ENCODE measurements at regions of chr1 and their contacts with region 1.

Region 1: DNA sequence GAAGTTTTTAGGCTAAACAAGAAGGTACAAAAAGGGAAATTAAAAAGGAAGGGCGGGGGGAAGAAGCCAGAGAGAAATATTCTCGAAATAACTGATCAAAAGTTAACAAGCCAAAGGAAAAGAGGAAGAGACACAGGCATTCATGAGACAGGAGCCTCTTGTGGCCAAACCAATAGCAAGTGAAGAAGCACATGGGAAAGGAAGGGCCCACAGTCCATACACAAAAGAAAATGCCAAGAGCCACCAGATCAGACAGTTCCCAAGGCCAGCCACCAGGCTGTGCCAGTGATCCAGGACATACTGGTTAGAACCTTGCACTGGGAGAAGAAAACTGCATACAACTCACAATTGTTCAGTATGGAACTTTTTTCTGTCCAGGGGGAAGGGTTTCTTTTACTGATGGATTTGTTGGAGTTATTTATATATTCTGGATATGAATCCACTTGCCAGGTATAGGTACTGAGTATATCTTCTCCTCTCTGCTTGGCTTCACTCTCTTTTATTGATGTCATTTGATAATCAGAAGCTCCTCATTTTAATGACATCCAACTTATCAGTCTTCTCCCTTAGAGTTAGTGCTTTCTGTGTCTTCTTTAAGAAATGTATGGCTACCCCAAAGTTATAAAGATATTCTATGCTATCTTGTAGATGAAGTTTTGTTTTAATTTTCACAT is 76.8 kb downstream of the CD46 start:
- DNase-seq: peak in 1 of 2 donors; percentile 91
- H3K4me3 ChIP-seq: no peak overlapping the region
- H3K27ac ChIP-seq: peak overlapping the region; percentile 12 to 98
- H3K4me1 ChIP-seq: peaks cover 28 to 71% of the 10 kb centered on the region in 2 donors
- H3K27me3 ChIP-seq: no peaks in the 10 kb centered on the region
- CTCF ChIP-seq: peak; percentile 84 to 93 (median 88)

Region 2: GRCh38 chr1:207848234-207848633 is 19.6 kb after region 1 on chr1:
- intact Hi-C with region 1: loop called (anchors 2 kb)
- DNase-seq: peak; percentile 53 to 84
- H3K4me3 ChIP-seq: no peak overlapping the region
- H3K27ac ChIP-seq: peak overlapping the region; percentile 64 to 82
- H3K4me1 ChIP-seq: peaks cover 20 to 72% of the 10 kb centered on the region in 2 donors
- H3K27me3 ChIP-seq: no peaks in the 10 kb centered on the region
- CTCF ChIP-seq: no peak

Region 3: GRCh38 chr1:207868774-207869721 is 40.4 kb after region 1 on chr1:
- intact Hi-C with region 1: loop called (anchors 1 kb)
- DNase-seq: peak in 1 of 2 donors; percentile 90
- H3K4me3 ChIP-seq: peak overlapping the region; percentile 86 to 98
- H3K27ac ChIP-seq: peak overlapping the region; percentile 88 to 98
- H3K4me1 ChIP-seq: peaks cover 16 to 36% of the 10 kb centered on the region in 2 donors
- H3K27me3 ChIP-seq: no peaks in the 10 kb centered on the region
- CTCF ChIP-seq: peak; percentile 65 to 99 (median 73)

Region 4: DNA sequence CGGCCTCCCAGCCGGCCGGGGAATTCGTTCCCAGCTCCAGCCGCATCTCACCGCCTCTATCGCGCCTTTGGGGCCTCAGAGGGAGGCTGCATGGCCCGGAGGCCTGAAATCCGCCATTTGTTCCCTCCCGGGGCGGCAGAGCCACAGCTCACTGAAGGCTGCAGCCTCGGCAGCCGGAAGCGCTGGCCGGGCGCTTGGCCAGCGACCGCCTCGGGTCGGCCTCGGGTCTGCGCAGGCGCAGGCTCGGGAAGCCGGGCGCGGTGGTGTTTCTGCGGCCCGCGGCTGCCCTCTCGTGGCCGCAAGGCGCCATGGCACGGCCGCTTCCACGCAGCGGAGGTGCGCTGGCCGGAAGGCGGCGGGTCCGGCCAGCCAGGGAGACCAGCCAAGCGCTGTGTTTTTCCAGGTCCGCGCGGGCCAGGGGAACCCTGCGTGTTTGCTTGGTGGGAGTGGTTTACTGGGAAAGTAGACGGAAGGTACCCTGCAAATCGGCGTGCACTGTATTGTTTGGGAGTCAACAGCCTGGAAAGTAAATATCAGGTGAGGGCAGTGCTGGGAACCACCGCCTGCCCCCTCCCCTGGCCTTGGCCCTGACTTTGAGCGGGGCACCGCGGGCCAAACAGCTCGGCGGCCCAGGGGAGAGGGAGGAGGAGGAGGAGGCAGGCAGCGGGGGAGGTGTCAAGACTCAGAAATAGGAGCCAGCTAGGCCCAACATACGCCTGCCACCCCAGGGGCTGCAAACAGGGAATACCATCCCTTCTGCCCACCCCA is 135.0 kb after region 1 on chr1:
- intact Hi-C with region 1: loop called (anchors 1 kb)
- DNase-seq: peak; percentile 35 to 95
- H3K4me3 ChIP-seq: peak overlapping the region; percentile 57 to 62
- H3K27ac ChIP-seq: peak overlapping the region; percentile 92
- H3K4me1 ChIP-seq: peaks cover 0 to 27% of the 10 kb centered on the region in 2 donors
- H3K27me3 ChIP-seq: no peaks in the 10 kb centered on the region
- CTCF ChIP-seq: peak; percentile 90 to 100 (median 96)

Region 5: GRCh38 chr1:208207388-208208131 is 378.9 kb after region 1 on chr1:
- intact Hi-C with region 1: loop called (anchors 5 kb)
- DNase-seq: peak; percentile 55 to 90
- H3K4me3 ChIP-seq: no peak overlapping the region
- H3K27ac ChIP-seq: peak overlapping the region; percentile 59 to 92
- H3K4me1 ChIP-seq: peaks cover 23 to 57% of the 10 kb centered on the region in 2 donors
- H3K27me3 ChIP-seq: no peaks in the 10 kb centered on the region
- CTCF ChIP-seq: no peak

Region 6: GRCh38 chr1:208245185-208245705 is 416.6 kb after region 1 on chr1:
- intact Hi-C with region 1: loop called (anchors 5 kb)
- DNase-seq: peak; percentile 62 to 98
- H3K4me3 ChIP-seq: peak overlapping the region; percentile 75 to 96
- H3K27ac ChIP-seq: peak overlapping the region; percentile 91 to 95
- H3K4me1 ChIP-seq: peaks cover 4 to 24% of the 10 kb centered on the region in 2 donors
- H3K27me3 ChIP-seq: no peaks in the 10 kb centered on the region
- CTCF ChIP-seq: peak; percentile 67 to 91 (median 83)

Measured in ascending aorta (tissue), 2 donors.